SK-N-SH (cell line): ENCODE measurements at regions of chr7 and their contacts with region 1.

Region 1: GRCh38 chr7:101410743-101411507 is 48.2 kb downstream of the COL26A1 start:
- DNase-seq: peak; percentile 94
- H3K4me3 ChIP-seq: peak overlapping the region in 1 of 2 experiments; percentile 30; a peak in 1 of 4 replicates
- H3K27ac ChIP-seq: no peak overlapping the region
- H3K4me1 ChIP-seq: peaks cover 0 to 4% of the 10 kb centered on the region in 2 experiments; a peak in 1 of 4 replicates
- H3K27me3 ChIP-seq: peaks cover 10% of the 10 kb centered on the region; the same call in 1 of the 2 replicates
- CTCF ChIP-seq: peak; percentile 88
- EP300 ChIP-seq: no peak
- RAD21 ChIP-seq: peak; percentile 83

Region 2: GRCh38 chr7:100753750-100754149 is 657.2 kb before region 1 on chr7:
- CTCF ChIA-PET with region 1: no interaction called
- POLR2A ChIA-PET with region 1: no interaction called
- DNase-seq: no peak
- H3K4me3 ChIP-seq: no peak overlapping the region
- H3K27ac ChIP-seq: no peak overlapping the region
- H3K4me1 ChIP-seq: no peaks in the 10 kb centered on the region
- H3K27me3 ChIP-seq: peaks cover 66% of the 10 kb centered on the region
- CTCF ChIP-seq: no peak
- EP300 ChIP-seq: no peak
- RAD21 ChIP-seq: no peak

Region 3: DNA sequence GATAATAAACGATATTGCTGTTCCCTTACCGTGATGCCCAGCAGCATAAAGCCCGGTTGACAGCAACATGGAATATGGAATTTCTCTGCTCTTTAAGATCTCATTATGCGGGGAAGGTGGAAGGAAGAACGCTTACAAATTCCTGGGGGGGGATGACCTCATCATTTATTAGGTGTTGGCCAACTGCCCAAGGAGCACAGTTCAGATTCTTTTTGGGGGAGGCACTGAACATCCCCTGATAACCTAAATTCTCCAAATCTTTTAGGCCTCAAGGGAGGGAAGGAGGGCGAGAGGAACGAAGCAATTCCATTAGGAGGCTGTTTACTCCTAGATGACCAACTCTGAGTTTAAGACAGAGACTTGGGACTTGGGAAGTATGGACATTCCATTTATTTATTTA is 53.5 kb before region 1 on chr7:
- CTCF ChIA-PET with region 1: interaction called, 95 read pairs
- POLR2A ChIA-PET with region 1: no interaction called
- DNase-seq: no peak
- H3K4me3 ChIP-seq: no peak overlapping the region
- H3K27ac ChIP-seq: no peak overlapping the region
- H3K4me1 ChIP-seq: peaks cover 0 to 2% of the 10 kb centered on the region in 2 experiments; a peak in 1 of 4 replicates
- H3K27me3 ChIP-seq: peaks cover 17% of the 10 kb centered on the region
- CTCF ChIP-seq: no peak
- EP300 ChIP-seq: no peak
- RAD21 ChIP-seq: no peak

Region 4: GRCh38 chr7:101378751-101379184 is 32.2 kb before region 1 on chr7:
- CTCF ChIA-PET with region 1: interaction called, 48 read pairs
- POLR2A ChIA-PET with region 1: no interaction called
- DNase-seq: peak; percentile 36
- H3K4me3 ChIP-seq: no peak overlapping the region
- H3K27ac ChIP-seq: no peak overlapping the region
- H3K4me1 ChIP-seq: peaks cover 0 to 2% of the 10 kb centered on the region in 2 experiments; a peak in 1 of 4 replicates
- H3K27me3 ChIP-seq: 0 out of 2 replicates have a peak, but pooled peaks cover 5% of the 10 kb centered on the region
- CTCF ChIP-seq: no peak
- EP300 ChIP-seq: no peak
- RAD21 ChIP-seq: no peak

Region 5: DNA sequence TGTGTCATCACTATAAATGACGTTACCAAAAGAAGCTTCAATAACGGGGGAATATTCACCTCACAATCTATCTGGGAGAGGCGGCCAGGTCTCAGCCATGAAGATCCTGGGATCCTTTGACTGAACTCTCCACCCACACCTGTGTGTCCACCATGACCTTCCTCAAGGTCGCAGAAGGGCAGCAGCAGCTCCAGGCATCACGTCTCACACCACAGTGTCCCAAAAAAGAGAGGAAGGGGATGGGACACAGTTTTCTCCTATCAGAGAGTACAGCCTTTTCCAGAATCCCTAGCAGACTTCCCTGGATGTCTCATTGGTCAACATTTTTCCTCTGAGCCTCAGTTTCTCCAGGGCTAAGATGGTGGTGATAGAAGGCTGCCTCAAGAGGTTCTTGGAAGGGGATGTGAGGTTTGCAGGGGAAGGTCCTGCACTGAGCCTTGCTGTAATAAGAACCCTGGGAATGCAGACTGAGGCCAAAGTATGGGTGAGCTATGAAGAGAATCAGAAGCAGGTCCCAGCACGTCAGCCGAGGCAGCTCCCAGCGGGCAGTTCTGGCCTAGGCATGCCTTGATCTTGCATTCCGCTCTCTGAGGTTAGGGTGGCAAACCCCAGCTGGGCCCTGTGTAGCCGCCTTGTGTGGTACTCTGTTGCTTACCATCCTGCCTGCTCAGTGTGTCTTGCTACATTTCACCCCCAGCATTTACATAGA is 15.5 kb after region 1 on chr7:
- CTCF ChIA-PET with region 1: interaction called, 38 read pairs
- POLR2A ChIA-PET with region 1: no interaction called
- DNase-seq: no peak
- H3K4me3 ChIP-seq: no peak overlapping the region
- H3K27ac ChIP-seq: no peak overlapping the region
- H3K4me1 ChIP-seq: no peaks in the 10 kb centered on the region
- H3K27me3 ChIP-seq: peaks cover 72% of the 10 kb centered on the region
- CTCF ChIP-seq: no peak
- EP300 ChIP-seq: no peak
- RAD21 ChIP-seq: no peak

Region 6: GRCh38 chr7:101502466-101503098 is 91.7 kb after region 1 on chr7:
- CTCF ChIA-PET with region 1: interaction called, 35 read pairs
- POLR2A ChIA-PET with region 1: no interaction called
- DNase-seq: no peak
- H3K4me3 ChIP-seq: no peak overlapping the region
- H3K27ac ChIP-seq: no peak overlapping the region
- H3K4me1 ChIP-seq: no peaks in the 10 kb centered on the region; a peak in 1 of 4 replicates
- H3K27me3 ChIP-seq: peaks cover 21% of the 10 kb centered on the region
- CTCF ChIP-seq: no peak
- EP300 ChIP-seq: no peak
- RAD21 ChIP-seq: no peak

Region 7: DNA sequence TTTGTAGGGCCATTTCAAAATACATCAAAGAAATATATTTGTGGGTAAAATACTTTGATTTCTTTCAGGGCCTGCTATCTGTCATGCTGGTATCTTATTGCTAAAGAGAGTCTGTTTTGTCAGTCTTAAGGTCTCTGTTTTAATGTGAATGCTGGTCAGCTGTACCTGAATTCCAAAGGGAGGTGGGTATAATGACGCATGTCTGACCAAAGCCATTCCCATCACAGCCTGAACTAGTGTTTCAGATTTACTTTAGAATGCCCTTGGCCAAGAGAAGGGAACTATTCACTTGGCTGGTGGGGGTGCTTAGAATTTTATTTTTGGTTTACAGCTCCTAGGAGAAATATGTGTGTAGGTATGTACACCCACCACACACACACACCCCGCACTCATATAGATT is 248.8 kb after region 1 on chr7:
- CTCF ChIA-PET with region 1: no interaction called
- POLR2A ChIA-PET with region 1: no interaction called
- DNase-seq: no peak
- H3K4me3 ChIP-seq: no peak overlapping the region
- H3K27ac ChIP-seq: no peak overlapping the region
- H3K4me1 ChIP-seq: no peaks in the 10 kb centered on the region; a peak in 1 of 4 replicates
- H3K27me3 ChIP-seq: peaks cover 9% of the 10 kb centered on the region; the same call in 1 of the 2 replicates
- CTCF ChIP-seq: no peak
- EP300 ChIP-seq: no peak
- RAD21 ChIP-seq: no peak